OCI-LY7 (cell line): ENCODE measurements at regions of chr16 and their contacts with region 1.

Region 1: GRCh38 chr16:81006814-81007696 is at the starts of genes CENPN and CMC2:
- DNase-seq: peak; percentile 98
- H3K4me3 ChIP-seq: peak within 1 kb of the TSS; percentile 75
- H3K27ac ChIP-seq: peak within 1 kb of the TSS; percentile 86
- H3K4me1 ChIP-seq: peaks cover 32% of the 10 kb centered on the region
- CTCF ChIP-seq: no peak
- total RNA-seq, gene CENPN: 52.4 and 97.3 TPM in 2 replicates
- total RNA-seq, gene CMC2: 61.3 and 99.8 TPM in 2 replicates

Region 2: DNA sequence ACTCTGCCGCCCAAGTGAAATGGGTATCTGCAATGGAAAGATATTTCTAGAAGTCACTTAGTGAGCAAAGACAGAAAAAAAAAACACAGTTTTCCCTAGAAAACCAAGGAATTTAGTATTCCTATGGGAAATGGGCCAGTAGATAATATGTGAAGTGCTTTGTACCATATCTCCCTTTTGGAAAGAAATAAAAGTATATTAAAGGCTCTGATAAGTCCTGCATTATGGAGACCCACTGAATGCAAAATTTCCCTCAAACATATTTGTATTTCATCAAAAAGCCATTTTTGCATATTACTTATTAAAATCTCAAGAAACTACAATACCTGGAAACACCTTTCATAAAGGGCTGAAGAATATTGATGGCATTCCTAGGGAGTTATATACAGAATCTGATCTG is 517.9 kb before region 1 on chr16:
- CTCF ChIA-PET with region 1: no interaction called
- POLR2A ChIA-PET with region 1: no interaction called
- intact Hi-C with region 1: no loop called
- DNase-seq: no peak
- H3K4me3 ChIP-seq: no peak overlapping the region
- H3K27ac ChIP-seq: no peak overlapping the region
- H3K4me1 ChIP-seq: no peaks in the 10 kb centered on the region
- CTCF ChIP-seq: no peak

Region 3: GRCh38 chr16:81042821-81043220 is 35.8 kb after region 1 on chr16:
- CTCF ChIA-PET with region 1: no interaction called
- POLR2A ChIA-PET with region 1: no interaction called
- intact Hi-C with region 1: no loop called
- DNase-seq: no peak
- H3K4me3 ChIP-seq: no peak overlapping the region
- H3K27ac ChIP-seq: no peak overlapping the region
- H3K4me1 ChIP-seq: peaks cover under 1% of the 10 kb centered on the region
- CTCF ChIP-seq: no peak

Region 4: GRCh38 chr16:81077076-81077940 is 70.3 kb after region 1 on chr16 and contains the start of gene C16orf46:
- CTCF ChIA-PET with region 1: no interaction called
- POLR2A ChIA-PET with region 1: no interaction called
- intact Hi-C with region 1: loop called (anchors 1 kb)
- DNase-seq: peak; percentile 96
- H3K4me3 ChIP-seq: peak within 1 kb of the TSS; percentile 74
- H3K27ac ChIP-seq: peak within 1 kb of the TSS; percentile 81
- H3K4me1 ChIP-seq: peaks cover 15% of the 10 kb centered on the region
- CTCF ChIP-seq: no peak
- total RNA-seq, gene C16orf46: 0.69 and 1.6 TPM in 2 replicates

Region 5: DNA sequence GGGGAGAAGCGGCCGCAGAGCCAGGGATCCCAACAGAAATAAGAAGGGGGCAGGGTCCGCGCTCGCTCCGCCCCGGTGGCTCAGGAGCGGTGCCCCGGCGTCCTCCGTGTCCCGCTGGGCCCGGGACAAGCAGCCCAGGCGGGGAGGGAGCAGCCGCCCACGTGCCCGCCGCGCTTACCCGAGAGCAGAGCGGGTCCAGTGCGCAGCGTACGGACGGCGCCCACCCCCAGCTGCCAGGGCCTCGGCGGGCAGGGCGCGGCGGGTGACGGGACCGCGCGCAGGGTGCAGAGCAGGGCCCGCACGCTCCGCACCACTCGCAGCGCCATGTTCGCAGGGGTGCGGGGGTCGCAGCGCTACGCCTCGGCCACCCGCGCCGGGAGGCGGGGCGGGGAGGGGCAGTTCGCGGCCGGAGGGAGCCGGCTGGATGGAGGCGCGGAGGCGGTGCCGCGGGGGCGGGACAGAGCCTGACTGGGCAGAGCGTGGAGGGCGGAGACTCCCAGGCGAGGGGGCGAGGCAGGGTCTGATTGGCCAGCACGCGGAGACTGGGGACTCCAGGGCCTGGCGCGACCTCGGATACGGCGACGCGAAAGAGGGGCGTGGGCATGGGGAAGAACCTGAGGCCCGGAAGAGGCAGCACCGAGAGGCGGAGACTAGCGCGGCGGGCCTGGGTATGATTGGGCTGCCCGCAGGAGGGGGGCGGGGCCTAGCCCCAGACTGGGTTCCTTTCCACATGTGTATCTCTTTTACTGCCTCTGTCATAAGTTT is 89.1 kb after region 1 on chr16 and contains the start of gene GCSH:
- CTCF ChIA-PET with region 1: no interaction called
- POLR2A ChIA-PET with region 1: interaction called, 5 read pairs
- intact Hi-C with region 1: loop called (anchors 1 kb)
- DNase-seq: peak; percentile 99
- H3K4me3 ChIP-seq: peak within 1 kb of the TSS; percentile 88
- H3K27ac ChIP-seq: no peak within 1 kb of the TSS
- H3K4me1 ChIP-seq: peaks cover 23% of the 10 kb centered on the region
- CTCF ChIP-seq: no peak
- total RNA-seq, gene GCSH: 11.7 and 23.4 TPM in 2 replicates